ENCODE measurements at regions of chr1 and their contacts with region 1.

Region 1: GRCh38 chr1:226827968-226828513 is 42.4 kb upstream of the PSEN2 start:
- DNase-seq: peak; percentile 66
- H3K4me3 ChIP-seq: no peak overlapping the region
- CTCF ChIP-seq: peak; percentile 96

Region 2: DNA sequence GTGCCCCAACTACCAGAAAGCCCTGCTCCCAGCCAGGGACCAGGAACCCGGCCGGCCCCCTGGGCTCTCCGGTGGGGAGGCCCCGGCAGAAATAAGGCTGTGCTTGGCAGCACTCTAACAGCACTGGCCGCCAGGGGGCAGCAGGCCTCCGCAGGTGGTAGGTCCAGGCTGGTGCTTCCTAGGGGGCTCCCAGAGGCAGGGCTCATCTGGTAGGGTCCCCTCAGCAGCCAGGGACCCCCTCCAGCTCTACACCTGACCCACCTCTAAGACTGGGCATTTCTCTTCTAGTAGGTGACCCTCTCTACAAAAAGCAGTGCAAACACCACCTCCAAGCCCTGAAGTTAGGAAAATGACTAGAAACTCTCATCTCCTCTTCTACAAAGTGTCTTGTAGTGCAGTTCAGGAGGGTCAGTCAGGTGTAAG is 193.9 kb before region 1 on chr1:
- CTCF ChIA-PET with region 1: interaction called, 424 read pairs
- POLR2A ChIA-PET with region 1: no interaction called
- DNase-seq: no peak
- H3K4me3 ChIP-seq: no peak overlapping the region
- CTCF ChIP-seq: peak; percentile 93

Region 3: GRCh38 chr1:226649780-226650179 is 178.3 kb before region 1 on chr1:
- CTCF ChIA-PET with region 1: interaction called, 12 read pairs
- POLR2A ChIA-PET with region 1: no interaction called
- DNase-seq: no peak
- H3K4me3 ChIP-seq: no peak overlapping the region
- CTCF ChIP-seq: peak; percentile 11

Region 4: GRCh38 chr1:226814751-226815496 is 13.1 kb before region 1 on chr1:
- CTCF ChIA-PET with region 1: interaction called, 30 read pairs
- POLR2A ChIA-PET with region 1: no interaction called
- DNase-seq: peak; percentile 12
- H3K4me3 ChIP-seq: no peak overlapping the region
- CTCF ChIP-seq: no peak

Region 5: DNA sequence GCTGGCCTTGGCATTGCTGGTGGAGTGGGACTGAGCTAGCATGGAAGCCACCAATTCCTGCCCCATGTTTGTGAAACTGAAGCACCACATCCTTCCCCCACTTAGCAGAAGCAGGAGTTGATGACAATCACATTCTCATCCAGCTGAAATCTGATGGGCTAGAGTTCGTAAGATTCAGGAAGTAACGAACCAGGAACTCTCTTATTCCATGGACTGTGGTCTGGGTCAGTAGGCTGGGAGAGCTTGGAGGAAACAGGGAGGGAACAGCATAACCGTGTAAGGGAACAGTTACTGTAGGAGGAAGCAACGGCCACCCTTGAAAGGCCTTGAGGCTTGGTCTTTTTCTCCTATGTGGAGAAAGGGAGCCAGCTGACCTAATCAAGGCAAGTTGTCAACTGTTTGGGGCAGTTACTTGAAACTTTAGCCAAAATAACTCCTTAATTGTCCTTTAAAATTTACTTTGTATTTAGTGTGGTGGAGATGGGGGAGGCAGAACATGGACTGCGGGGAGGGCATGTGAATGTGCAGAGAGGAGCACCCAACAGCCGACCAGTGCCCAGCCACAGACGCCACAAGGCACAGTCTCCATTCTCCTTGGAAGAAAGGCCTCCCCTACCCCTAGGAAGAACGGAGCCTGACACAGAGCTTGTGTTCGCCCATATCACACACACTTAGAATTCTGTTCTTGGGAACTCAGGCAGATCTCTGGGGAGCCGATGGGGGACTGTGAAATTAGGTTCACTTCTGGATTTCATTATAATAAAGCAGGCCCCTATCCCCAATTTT is 110.1 kb after region 1 on chr1:
- CTCF ChIA-PET with region 1: no interaction called
- POLR2A ChIA-PET with region 1: no interaction called
- DNase-seq: no peak
- H3K4me3 ChIP-seq: no peak overlapping the region
- CTCF ChIP-seq: no peak